ENCODE measurements at regions of chr2 and their contacts with region 1.

Region 1: GRCh38 chr2:85470850-85471800 is 52.6 kb downstream of the SH2D6 start:
- DNase-seq: peak; percentile 61 to 72 (median 72)
- ATAC-seq: peak; percentile 69
- H3K4me3 ChIP-seq: no peak overlapping the region
- H3K4me1 ChIP-seq: peaks cover 37% of the 10 kb centered on the region
- CTCF ChIP-seq: no peak

Region 2: GRCh38 chr2:85516653-85517406 is 45.7 kb after region 1 on chr2:
- intact Hi-C with region 1: loop called in 1 of 2 experiments (anchors 5 kb)
- DNase-seq: peak; percentile 70 to 77 (median 72)
- ATAC-seq: peak; percentile 97
- H3K4me3 ChIP-seq: no peak overlapping the region
- H3K4me1 ChIP-seq: peaks cover 8% of the 10 kb centered on the region
- CTCF ChIP-seq: no peak

Measured in mucosa of descending colon (tissue), 3 donors.